ENCODE measurements at regions of chr3 and their contacts with region 1.

Region 1: DNA sequence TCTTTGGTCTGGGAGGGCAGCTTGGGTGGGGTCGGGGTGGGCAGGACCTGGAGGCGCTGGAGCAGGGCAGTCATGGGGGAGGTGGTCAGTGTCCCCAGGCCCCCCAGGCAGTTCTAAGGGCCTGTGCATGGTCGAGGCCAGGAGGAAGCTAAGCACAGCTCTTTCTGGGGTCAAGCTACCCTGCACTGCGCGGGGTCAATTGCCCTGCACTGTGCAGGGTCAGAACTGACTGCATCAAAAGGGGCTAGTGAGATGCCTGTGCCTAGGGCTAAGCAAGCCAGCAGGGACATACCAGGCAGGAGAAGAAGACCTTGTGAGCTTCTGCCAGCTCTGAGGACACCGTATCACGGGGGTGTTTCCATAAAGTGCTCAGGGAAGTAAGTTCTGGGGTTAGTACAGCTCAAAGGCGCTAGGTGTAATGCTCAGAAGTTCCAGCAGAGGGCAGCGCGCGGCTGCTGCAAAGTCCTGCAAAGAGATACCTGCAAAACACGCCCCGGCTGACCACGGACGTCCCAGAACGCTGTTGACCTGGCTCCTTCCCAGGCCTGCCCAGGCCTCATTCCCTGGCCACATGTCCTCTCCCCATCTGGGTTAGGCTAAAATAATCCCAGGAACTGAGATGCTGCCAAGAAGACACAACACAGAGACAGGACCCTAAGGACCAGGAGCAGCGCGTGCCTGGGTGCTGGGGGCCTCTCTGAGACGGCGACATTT is 18.8 kb upstream of the IQSEC1 start:
- DNase-seq: peak; percentile 89
- H3K4me3 ChIP-seq: no peak overlapping the region
- H3K27ac ChIP-seq: peak overlapping the region; percentile 4 to 30
- H3K4me1 ChIP-seq: no peaks in the 10 kb centered on the region
- H3K27me3 ChIP-seq: no peaks in the 10 kb centered on the region
- CTCF ChIP-seq: peak; percentile 88 to 98 (median 96)
- POLR2A ChIP-seq: no peak

Region 2: GRCh38 chr3:13277860-13278531 is 185.9 kb after region 1 on chr3:
- intact Hi-C with region 1: loop called (anchors 5 kb)
- DNase-seq: peak; percentile 42
- H3K4me3 ChIP-seq: no peak overlapping the region
- H3K27ac ChIP-seq: peak overlapping the region; percentile 70 to 76
- H3K4me1 ChIP-seq: peaks cover 4% of the 10 kb centered on the region
- H3K27me3 ChIP-seq: no peaks in the 10 kb centered on the region
- CTCF ChIP-seq: no peak
- POLR2A ChIP-seq: no peak

Region 3: DNA sequence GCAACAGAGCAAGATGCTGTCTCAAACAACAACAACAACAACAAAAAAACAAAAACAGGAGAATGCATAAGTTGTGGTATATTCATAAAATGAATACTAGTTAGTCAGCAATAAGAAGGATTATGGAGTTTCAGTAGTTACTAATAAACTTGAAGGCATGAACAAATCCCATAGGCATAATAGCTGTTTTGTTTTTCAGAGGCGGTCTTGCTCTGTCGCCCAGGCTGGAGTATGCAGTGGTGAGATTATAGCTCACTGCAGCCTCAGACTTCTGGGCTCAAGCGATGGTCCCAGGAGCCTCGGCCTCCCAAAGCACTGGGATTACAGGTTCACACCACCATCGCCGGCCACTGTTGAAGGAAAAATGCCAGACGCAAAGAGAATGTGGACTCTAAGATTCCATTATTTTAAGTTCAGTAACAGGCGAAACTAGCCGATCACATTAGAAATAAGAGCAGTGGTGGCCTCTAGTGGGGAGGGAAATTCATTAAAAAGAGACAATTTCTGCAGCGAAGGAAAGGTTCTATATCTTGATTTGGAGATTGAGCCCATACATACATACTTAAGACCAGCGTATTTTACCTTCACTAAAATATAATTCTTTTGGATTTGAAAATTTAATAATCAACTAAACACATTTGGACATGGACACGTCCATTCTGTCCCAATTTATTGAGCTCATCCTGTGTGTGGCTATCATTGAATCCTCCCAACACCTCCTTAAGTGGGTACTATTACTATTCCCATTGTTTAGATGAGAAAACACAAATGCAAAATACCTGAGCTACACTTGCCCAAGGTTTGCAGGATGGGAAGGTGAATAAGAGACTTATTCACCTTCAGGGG is 360.7 kb after region 1 on chr3:
- intact Hi-C with region 1: loop called (anchors 1 kb)
- DNase-seq: peak; percentile 42
- H3K4me3 ChIP-seq: no peak overlapping the region
- H3K27ac ChIP-seq: peak overlapping the region; percentile 94 to 97
- H3K4me1 ChIP-seq: no peaks in the 10 kb centered on the region
- H3K27me3 ChIP-seq: no peaks in the 10 kb centered on the region
- CTCF ChIP-seq: peak in 3 of 4 experiments; percentile 61 to 76 (median 70)
- POLR2A ChIP-seq: no peak

Region 4: GRCh38 chr3:13648060-13649001 is 556.3 kb after region 1 on chr3:
- intact Hi-C with region 1: loop called (anchors 5 kb)
- DNase-seq: peak; percentile 79
- H3K4me3 ChIP-seq: no peak overlapping the region
- H3K27ac ChIP-seq: no peak overlapping the region
- H3K4me1 ChIP-seq: no peaks in the 10 kb centered on the region
- H3K27me3 ChIP-seq: no peaks in the 10 kb centered on the region
- CTCF ChIP-seq: peak; percentile 96 to 98 (median 98)
- POLR2A ChIP-seq: no peak